ENCODE measurements at regions of chr15 and their contacts with region 1.

Region 1: GRCh38 chr15:57320631-57321220 is 55.6 kb upstream of the CGNL1 start:
- H3K4me3 Mint-ChIP-seq: peak overlapping the region; percentile 48
- H3K27ac Mint-ChIP-seq: peak overlapping the region; percentile 96
- H3K4me1 Mint-ChIP-seq: peaks cover 33% of the 10 kb centered on the region
- H3K27me3 Mint-ChIP-seq: peaks cover 12% of the 10 kb centered on the region

Region 2: DNA sequence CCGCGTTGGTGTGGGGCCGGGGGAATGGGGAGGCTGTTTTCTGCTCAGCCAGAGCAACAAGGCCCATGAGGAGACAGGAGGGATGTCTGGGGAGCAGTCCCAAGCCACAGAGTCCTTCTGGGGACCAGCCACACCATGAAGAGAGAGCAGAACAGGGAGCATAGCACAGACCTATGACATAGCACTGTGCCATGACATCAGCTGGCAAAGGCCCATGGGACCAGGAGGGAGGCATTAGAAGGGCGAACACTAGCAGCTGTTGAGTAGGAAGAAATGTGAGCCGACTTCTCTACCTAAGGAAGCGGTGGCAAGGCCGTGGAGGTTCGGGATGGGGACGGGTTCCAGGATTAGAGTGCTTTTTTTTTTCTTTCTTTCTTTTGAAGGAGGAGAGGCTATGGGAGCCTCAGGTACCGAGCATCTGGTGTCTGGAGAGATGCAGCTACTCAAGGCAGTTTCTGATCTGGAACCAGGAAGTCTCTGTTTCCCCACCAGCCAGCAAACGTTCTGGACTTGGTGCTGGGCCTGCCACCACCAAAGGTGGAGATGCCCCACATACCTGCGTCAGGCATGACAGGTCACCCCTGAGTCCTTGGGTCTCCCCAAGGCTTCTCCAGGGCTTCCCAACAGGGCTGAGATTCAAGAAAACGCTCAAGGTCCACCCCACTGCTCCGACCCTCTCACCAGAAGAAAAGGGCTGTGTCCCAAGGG is 21.7 kb before region 1 on chr15:
- intact Hi-C with region 1: loop called (anchors 2 kb)
- H3K4me3 Mint-ChIP-seq: no peak overlapping the region
- H3K27ac Mint-ChIP-seq: peak overlapping the region; percentile 88
- H3K4me1 Mint-ChIP-seq: peaks cover 78% of the 10 kb centered on the region
- H3K27me3 Mint-ChIP-seq: no peaks in the 10 kb centered on the region

Region 3: DNA sequence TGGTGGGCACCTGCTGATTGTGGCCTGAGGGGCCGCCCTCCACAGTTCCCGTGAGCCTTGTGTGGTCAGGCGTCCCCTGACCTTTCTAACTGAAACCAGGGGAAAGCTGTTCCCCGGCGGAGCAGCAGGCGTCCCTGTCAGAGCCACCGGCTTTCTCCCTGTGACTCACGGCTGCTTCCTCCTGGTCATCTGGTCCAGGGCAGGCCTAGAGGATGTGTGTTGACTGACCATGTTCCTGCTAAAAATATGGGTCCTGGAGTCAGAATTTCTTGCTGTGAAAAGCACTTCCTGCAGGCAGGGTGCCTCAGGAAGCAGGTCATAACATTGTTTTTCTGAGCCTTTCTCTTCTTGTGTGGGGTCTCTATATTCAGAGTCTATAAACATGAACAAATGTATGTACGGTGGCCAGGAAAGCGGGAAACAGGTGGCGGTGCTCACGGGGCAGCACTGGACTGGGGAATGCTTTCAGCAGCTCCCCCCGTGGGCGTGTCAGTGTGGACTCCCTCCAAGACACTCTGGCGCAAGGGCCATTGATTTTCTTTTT is 17.2 kb after region 1 on chr15:
- intact Hi-C with region 1: no loop called
- H3K4me3 Mint-ChIP-seq: no peak overlapping the region
- H3K27ac Mint-ChIP-seq: no peak overlapping the region
- H3K4me1 Mint-ChIP-seq: peaks cover 9% of the 10 kb centered on the region
- H3K27me3 Mint-ChIP-seq: peaks cover 6% of the 10 kb centered on the region

Region 4: DNA sequence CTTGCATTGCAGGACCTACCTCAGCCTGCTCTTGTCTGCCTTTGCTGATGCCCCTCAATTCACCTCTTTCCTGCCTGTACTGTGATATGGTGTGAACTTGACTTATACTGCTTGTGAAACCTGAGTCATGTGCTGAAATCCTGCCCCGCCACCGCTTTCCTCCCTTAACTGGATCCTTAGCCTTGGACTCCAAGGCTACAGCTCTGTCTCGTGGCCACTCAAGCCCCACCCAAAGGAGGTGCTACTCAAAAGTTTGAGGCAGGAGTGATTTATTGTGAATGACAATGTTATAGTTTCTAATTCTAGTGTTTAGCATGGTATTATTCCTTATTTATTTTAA is 327.0 kb after region 1 on chr15:
- intact Hi-C with region 1: no loop called
- H3K4me3 Mint-ChIP-seq: no peak overlapping the region
- H3K27ac Mint-ChIP-seq: no peak overlapping the region
- H3K4me1 Mint-ChIP-seq: peaks cover 8% of the 10 kb centered on the region
- H3K27me3 Mint-ChIP-seq: no peaks in the 10 kb centered on the region